Psoas muscle (tissue), 8 donors: ENCODE measurements at regions of chr10 and their contacts with region 1.

Region 1: DNA sequence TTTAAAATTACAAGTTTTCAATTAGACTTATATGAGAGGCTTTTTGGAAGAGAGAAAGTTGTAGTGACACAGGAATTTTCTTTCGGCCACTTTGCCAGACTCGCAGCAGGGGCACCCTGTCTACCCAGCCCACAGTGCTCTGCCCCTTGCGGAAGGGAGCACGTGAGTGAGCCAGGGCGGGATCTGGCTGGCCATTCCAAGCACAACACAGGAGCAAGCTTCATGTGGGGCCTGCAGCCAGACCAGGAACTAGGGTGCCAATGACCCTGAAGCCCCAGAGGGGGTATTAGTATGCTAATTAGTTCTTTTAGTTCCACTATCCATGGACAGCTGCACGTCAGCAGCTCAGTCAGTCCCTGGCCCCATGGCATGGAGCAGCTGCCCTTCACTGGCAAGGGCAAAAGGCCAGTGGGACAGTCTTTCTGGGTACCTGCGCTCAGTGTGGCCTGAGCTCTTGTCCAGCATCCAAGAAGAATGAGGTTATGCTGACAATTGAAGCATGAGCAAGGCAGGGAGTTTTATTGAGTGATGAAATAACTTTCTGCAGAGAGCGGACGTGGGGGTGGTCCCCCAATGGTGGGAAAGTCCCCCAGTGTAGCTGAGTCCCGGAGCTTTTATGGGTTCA is 251.1 kb upstream of the CSTF2T start:
- DNase-seq: peak; percentile 24 to 56
- ATAC-seq: peak; percentile 87 to 97 (median 94)
- H3K4me3 ChIP-seq: peak overlapping the region; percentile 46
- H3K27ac ChIP-seq: peak overlapping the region; percentile 83
- H3K4me1 ChIP-seq: peaks cover 29% of the 10 kb centered on the region
- H3K27me3 ChIP-seq: no peaks in the 10 kb centered on the region
- CTCF ChIP-seq: no peak

Region 2: GRCh38 chr10:51867956-51868355 is 82.5 kb before region 1 on chr10:
- intact Hi-C with region 1: loop called in 1 of 2 experiments (anchors 5 kb)
- DNase-seq: no peak
- ATAC-seq: peak in 2 of 4 donors; percentile 44 to 62
- H3K4me3 ChIP-seq: no peak overlapping the region
- H3K27ac ChIP-seq: no peak overlapping the region
- H3K4me1 ChIP-seq: no peaks in the 10 kb centered on the region
- H3K27me3 ChIP-seq: no peaks in the 10 kb centered on the region
- CTCF ChIP-seq: no peak

Region 3: GRCh38 chr10:51918884-51919325 is 31.6 kb before region 1 on chr10:
- intact Hi-C with region 1: no loop called
- DNase-seq: no peak
- ATAC-seq: no peak
- H3K4me3 ChIP-seq: no peak overlapping the region
- H3K27ac ChIP-seq: no peak overlapping the region
- H3K4me1 ChIP-seq: peaks cover 3% of the 10 kb centered on the region
- H3K27me3 ChIP-seq: no peaks in the 10 kb centered on the region
- CTCF ChIP-seq: no peak

Region 4: DNA sequence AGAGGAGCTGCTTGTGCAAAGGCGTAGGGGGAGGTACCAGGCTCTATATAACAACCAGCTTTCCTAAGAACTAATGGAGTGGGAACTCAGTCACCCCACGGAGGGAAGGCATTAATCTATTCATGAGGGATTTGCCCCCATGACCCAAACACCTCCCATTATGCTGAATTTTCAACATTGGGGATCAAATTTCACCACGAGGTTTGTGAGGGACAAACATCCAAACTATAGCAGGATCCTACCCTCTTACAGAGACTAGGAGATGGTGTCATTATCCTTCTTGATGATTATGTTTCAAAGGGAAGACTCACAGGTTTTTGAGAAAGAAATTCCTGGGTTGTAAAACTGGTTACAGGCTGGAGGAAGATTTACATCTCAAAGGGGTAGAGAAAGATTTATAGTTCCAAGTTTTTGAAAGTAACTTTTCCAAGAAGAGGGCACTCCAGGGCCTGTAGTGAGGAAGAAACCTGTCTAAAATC is 68.6 kb after region 1 on chr10:
- intact Hi-C with region 1: no loop called
- DNase-seq: no peak
- ATAC-seq: no peak
- H3K4me3 ChIP-seq: no peak overlapping the region
- H3K27ac ChIP-seq: no peak overlapping the region
- H3K4me1 ChIP-seq: no peaks in the 10 kb centered on the region
- H3K27me3 ChIP-seq: no peaks in the 10 kb centered on the region
- CTCF ChIP-seq: no peak